GM12878 (cell line): ENCODE measurements at regions of chr6 and their contacts with region 1.

Region 1: GRCh38 chr6:137921823-137922222 is 54.8 kb downstream of the TNFAIP3 start:
- DNase-seq: no peak
- ATAC-seq: peak; percentile 61
- H3K4me3 ChIP-seq: no peak overlapping the region
- H3K27ac ChIP-seq: peak overlapping the region; percentile 33; the same call in 1 of the 2 replicates
- H3K4me1 ChIP-seq: peaks cover 65% of the 10 kb centered on the region
- H3K27me3 ChIP-seq: no peaks in the 10 kb centered on the region
- CTCF ChIP-seq: peak; percentile 16 to 33 (median 22); a peak in 3 of 6 replicates
- EP300 ChIP-seq: no peak
- POLR2A ChIP-seq: no peak
- RAD21 ChIP-seq: peak; percentile 51

Region 2: GRCh38 chr6:137933696-137934095 is 11.9 kb after region 1 on chr6:
- CTCF ChIA-PET with region 1: interaction called, 102 read pairs
- POLR2A ChIA-PET with region 1: interaction called, 26 read pairs
- RAD21 ChIA-PET with region 1: interaction called, 57 read pairs
- SMC1A ChIA-PET with region 1: interaction called, 111 read pairs
- in situ Hi-C with region 1: no loop called
- intact Hi-C with region 1: no loop called
- DNase-seq: no peak
- ATAC-seq: no peak
- H3K4me3 ChIP-seq: no peak overlapping the region
- H3K27ac ChIP-seq: peak overlapping the region; percentile 53
- H3K4me1 ChIP-seq: peaks cover 28% of the 10 kb centered on the region
- H3K27me3 ChIP-seq: no peaks in the 10 kb centered on the region
- CTCF ChIP-seq: no peak
- EP300 ChIP-seq: no peak
- POLR2A ChIP-seq: no peak
- RAD21 ChIP-seq: no peak